ENCODE measurements at regions of chr18 and their contacts with region 1.

Region 1: GRCh38 chr18:73653827-73654226 is 493.8 kb downstream of the FBXO15 start:
- DNase-seq: no peak
- ATAC-seq: no peak
- H3K4me3 ChIP-seq: no peak overlapping the region
- H3K4me3 Mint-ChIP-seq: no peak overlapping the region
- H3K27ac ChIP-seq: no peak overlapping the region
- H3K27ac Mint-ChIP-seq: no peak overlapping the region
- H3K4me1 ChIP-seq: no peaks in the 10 kb centered on the region
- H3K4me1 Mint-ChIP-seq: no peaks in the 10 kb centered on the region
- H3K27me3 ChIP-seq: no peaks in the 10 kb centered on the region
- H3K27me3 Mint-ChIP-seq: no peaks in the 10 kb centered on the region
- CTCF ChIP-seq: no peak

Region 2: DNA sequence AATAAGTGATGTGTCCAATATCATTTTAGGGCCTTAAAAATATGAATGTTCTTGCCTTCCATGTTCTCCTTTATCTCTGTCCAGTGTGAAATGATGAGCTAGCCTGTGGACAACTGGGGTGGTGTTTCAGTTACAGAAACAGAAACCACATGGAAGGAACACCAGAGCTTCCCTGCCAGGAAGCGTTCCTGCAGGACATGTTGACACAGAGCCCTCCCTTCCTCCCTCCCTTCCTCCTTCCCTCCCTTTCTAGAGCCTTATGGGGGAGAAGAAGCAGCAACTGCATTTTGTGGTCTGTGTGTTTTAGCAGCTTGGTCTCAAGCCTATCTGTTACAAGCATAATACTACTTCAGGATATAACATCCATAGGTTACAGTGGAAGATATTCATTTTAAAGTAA is 246.3 kb before region 1 on chr18:
- CTCF ChIA-PET with region 1: no interaction called
- POLR2A ChIA-PET with region 1: no interaction called
- intact Hi-C with region 1: loop called in 1 of 2 experiments (anchors 5 kb)
- DNase-seq: no peak
- ATAC-seq: no peak
- H3K4me3 ChIP-seq: no peak overlapping the region
- H3K4me3 Mint-ChIP-seq: no peak overlapping the region
- H3K27ac ChIP-seq: no peak overlapping the region
- H3K27ac Mint-ChIP-seq: no peak overlapping the region
- H3K4me1 ChIP-seq: no peaks in the 10 kb centered on the region
- H3K4me1 Mint-ChIP-seq: no peaks in the 10 kb centered on the region
- H3K27me3 ChIP-seq: no peaks in the 10 kb centered on the region
- H3K27me3 Mint-ChIP-seq: no peaks in the 10 kb centered on the region
- CTCF ChIP-seq: no peak